ENCODE measurements at regions of chr3 and their contacts with region 1.

Region 1: DNA sequence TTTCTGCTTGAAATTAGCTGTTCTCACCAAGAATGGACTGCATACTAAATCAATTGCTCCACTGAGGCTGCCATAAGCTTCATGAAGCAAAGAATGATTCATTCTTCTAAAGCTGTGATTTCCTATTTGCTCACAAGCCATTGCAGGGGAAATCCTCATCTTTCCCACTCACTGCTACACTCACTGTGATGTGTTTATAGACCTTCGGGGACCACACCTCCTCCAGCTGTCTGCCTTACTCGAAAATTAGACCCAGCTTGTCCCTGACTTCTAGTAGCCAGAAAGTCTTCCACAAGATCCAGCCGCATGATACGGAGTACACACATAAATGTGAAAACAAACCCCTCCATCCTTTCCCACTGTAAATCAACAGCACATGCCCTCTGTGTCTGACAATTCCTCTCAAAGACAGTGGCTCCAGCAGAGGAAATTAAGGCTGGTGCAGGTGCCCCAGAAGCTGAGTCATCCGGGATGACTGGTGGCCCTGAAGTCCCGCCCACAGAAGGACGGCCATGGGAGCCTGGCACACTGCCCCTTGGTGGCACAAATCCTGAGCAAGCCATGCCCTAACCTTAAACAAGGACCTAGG is 172.0 kb downstream of the STT3B start:
- DNase-seq: peak; percentile 74
- H3K4me3 Mint-ChIP-seq: peak overlapping the region; percentile 55
- H3K27ac Mint-ChIP-seq: peak overlapping the region; percentile 85
- H3K4me1 Mint-ChIP-seq: peaks cover 13% of the 10 kb centered on the region
- H3K27me3 Mint-ChIP-seq: peaks cover 7% of the 10 kb centered on the region

Region 2: DNA sequence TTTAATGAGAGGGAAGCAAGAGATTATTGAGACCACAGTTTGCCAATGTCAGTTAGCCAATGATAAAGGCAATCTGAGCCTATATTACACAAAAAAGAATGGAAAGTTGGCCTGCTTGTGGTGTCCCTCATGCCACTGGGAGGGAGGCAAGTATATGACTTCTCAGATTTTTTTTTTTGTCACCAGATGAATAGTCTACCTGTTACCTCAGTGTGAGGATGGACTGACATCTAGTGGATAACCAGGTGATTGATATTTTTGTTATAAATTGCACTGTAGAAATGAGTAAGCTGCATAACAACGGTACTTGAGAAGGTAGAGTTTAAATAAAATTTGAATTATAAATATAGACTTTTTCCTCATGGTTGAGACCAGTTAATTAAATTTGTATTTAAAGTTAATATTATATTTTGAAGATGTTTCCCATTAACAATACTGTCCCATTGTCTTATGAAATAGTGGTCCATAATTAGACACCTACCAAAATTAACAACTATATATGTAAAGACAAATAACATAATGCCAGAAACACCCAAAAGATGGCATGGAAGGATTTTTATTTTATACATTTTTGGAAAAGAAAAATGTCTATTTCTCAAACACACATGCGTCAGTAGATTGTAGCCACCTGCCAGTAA is 572.4 kb before region 1 on chr3:
- CTCF ChIA-PET with region 1: no interaction called
- intact Hi-C with region 1: loop called (anchors 5 kb)
- DNase-seq: no peak
- H3K4me3 Mint-ChIP-seq: no peak overlapping the region
- H3K27ac Mint-ChIP-seq: no peak overlapping the region
- H3K4me1 Mint-ChIP-seq: no peaks in the 10 kb centered on the region
- H3K27me3 Mint-ChIP-seq: no peaks in the 10 kb centered on the region

Region 3: DNA sequence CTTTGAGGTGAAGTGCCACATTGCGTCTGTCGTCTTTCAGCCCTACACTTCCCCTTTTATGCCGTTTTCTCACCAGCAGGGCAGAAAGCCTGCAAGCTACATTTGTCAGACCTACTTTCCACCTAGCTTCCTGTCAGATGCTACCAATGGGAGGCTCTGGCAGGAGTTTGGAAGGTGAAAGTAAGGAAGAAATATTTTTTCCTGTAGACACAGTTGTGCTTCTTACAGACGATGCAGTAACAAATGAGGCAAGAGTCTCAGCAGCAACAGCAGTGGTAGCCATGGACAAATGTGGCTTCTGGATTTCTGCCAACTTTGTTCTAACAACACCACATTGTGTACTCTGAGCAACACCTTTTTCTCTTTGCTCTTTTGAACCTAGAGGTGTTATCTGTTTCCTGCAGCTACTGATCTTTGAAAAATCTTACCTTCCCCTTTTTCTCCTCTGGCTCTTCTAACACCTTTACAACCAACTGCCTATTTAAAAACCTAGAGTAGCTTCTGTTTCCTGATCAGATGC is 242.6 kb before region 1 on chr3:
- CTCF ChIA-PET with region 1: no interaction called
- intact Hi-C with region 1: loop called (anchors 5 kb)
- DNase-seq: peak; percentile 56
- H3K4me3 Mint-ChIP-seq: peak overlapping the region; percentile 35
- H3K27ac Mint-ChIP-seq: peak overlapping the region; percentile 70
- H3K4me1 Mint-ChIP-seq: peaks cover 51% of the 10 kb centered on the region
- H3K27me3 Mint-ChIP-seq: no peaks in the 10 kb centered on the region

Region 4: DNA sequence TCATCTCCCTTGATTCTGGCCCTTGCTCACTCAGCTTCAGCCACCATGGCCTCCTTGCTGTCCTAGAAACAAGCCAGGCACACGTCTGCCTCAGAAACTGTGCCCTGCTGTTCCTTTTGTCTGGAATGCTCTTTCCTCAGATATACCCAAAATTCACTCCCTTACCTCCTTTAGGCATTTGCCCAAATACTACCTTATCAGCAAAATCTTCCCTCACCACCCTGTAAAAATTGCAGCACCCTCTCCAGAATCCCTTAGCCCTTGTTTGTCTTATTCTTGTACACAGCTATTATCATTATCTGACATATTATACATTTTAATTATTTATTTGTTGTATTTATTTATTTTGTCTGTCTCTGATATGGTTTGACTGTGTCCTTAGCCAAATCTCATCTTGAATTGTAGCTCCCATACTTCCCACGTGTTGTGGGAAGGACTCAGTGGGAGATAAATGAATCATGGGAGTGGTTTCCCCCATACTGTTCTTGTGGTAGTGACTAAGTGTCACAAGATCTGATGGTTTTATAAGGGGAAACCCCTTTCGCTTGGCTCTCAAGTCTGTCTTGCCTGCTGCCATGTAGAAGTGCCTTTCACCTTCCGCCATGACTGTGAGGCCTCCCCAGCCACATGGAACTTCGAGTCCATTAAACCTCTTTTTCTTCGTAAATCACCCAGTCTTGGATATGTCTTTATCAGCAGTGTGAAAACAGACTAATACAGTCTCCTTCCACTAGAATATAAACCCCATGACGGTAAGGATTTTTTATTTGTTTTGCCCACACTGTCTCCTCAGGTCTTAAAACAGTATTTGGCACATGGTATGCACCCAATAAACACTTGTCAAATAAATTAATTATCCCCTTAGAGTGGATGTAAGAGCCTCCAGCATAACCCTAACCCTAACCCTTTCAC is 231.9 kb before region 1 on chr3:
- CTCF ChIA-PET with region 1: no interaction called
- intact Hi-C with region 1: loop called (anchors 2 kb)
- DNase-seq: peak; percentile 62
- H3K4me3 Mint-ChIP-seq: no peak overlapping the region
- H3K27ac Mint-ChIP-seq: no peak overlapping the region
- H3K4me1 Mint-ChIP-seq: peaks cover 21% of the 10 kb centered on the region
- H3K27me3 Mint-ChIP-seq: no peaks in the 10 kb centered on the region

Region 5: GRCh38 chr3:31610700-31611275 is 93.9 kb before region 1 on chr3:
- CTCF ChIA-PET with region 1: no interaction called
- intact Hi-C with region 1: loop called (anchors 2 kb)
- DNase-seq: peak; percentile 31
- H3K4me3 Mint-ChIP-seq: no peak overlapping the region
- H3K27ac Mint-ChIP-seq: no peak overlapping the region
- H3K4me1 Mint-ChIP-seq: peaks cover 60% of the 10 kb centered on the region
- H3K27me3 Mint-ChIP-seq: no peaks in the 10 kb centered on the region

Region 6: GRCh38 chr3:31634481-31634880 is 70.2 kb before region 1 on chr3:
- CTCF ChIA-PET with region 1: interaction called, 3 read pairs
- intact Hi-C with region 1: loop called (anchors 1 kb)
- DNase-seq: no peak
- H3K4me3 Mint-ChIP-seq: no peak overlapping the region
- H3K27ac Mint-ChIP-seq: peak overlapping the region; percentile 24
- H3K4me1 Mint-ChIP-seq: peaks cover 41% of the 10 kb centered on the region
- H3K27me3 Mint-ChIP-seq: no peaks in the 10 kb centered on the region